ENCODE measurements at regions of chr18 and their contacts with region 1.

Region 1: DNA sequence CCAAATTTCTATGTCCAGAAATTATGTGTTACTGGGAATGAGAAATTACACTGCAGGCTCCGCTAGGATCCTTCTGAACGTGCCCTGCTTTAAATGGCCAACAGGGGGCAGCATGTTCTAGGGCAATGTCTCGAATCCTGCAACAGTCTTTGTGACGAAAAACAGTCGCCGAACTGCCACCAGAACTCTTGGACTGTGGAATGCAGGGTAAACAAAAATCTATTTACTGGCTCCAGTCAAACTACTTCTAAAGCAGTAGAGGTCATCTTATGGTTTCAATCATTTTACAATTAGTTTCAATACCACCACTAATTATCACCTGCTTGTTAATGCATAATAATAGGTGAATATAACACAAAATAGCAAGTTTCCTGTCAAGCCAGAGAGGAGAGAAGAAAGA is 9.8 kb upstream of the ZNF397 start:
- DNase-seq: peak; percentile 79
- ATAC-seq: peak; percentile 80 to 91

Region 2: DNA sequence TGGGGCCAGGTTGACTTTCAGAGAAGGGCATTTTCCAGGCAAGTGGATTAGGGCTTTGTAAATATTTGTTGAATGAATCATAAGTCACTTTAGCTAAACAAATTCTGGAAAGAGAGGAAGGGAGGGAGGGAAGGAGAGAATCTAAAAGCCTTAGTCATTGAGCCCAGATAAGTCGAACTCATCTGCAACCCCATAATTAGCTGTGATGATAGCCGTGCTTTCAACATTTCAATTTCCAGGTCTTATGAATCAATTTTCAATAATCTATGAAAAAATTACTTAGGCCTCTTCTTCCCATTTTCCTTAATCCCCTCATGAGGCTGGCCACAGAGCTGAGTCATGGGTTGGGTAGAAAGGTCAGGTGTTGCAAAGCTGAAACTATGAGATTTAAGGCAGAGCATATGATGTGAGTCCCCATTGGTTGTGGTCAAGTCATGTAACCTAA is 301.7 kb before region 1 on chr18:
- intact Hi-C with region 1: no loop called
- DNase-seq: no peak
- ATAC-seq: peak; percentile 8 to 39

Region 3: DNA sequence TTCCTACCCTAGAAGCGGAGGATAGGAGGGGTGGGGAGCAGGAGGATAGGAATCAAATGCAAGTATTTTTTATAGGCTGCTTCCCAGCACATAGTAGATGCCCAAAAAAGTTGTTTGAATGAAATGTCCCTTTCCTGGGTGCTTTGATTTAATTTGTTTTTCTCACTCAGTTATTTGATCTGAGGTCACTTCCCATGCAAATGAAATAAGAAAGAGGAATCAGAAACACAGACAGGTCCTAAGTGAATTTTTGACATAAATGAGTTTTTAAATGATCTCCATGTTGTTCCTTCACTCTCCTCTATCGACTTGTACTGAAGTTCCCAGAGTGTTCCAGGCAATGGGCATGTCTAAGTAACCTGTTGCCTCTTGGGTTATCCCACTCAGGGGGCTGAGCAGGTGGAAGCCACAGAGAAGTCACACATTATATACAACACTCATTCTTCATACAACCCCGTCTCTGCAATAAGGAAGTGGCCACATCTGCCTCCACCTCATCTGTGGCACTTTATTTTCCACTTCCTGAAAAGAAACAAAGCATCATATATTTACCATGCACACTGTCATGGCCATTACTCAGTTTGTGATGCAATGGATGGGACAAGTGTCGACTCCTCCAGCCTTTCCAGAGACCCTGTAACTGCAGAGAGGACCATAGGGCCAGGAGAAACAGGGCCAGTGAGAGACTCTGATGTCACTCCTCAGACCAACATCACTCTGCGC is 72.2 kb before region 1 on chr18:
- intact Hi-C with region 1: no loop called
- DNase-seq: no peak
- ATAC-seq: peak in 1 of 2 donors; percentile 10

Region 4: GRCh38 chr18:35355140-35355618 is 124.1 kb after region 1 on chr18:
- intact Hi-C with region 1: loop called (anchors 2 to 5 kb)
- DNase-seq: peak; percentile 78
- ATAC-seq: peak; percentile 99

Measured in left cardiac atrium (tissue), 4 donors.